Activated B cell treated with CpG ODN at 0.5 μM for 24 hours (primary cell): ENCODE measurements at regions of chr20 and their contacts with region 1.

Region 1: DNA sequence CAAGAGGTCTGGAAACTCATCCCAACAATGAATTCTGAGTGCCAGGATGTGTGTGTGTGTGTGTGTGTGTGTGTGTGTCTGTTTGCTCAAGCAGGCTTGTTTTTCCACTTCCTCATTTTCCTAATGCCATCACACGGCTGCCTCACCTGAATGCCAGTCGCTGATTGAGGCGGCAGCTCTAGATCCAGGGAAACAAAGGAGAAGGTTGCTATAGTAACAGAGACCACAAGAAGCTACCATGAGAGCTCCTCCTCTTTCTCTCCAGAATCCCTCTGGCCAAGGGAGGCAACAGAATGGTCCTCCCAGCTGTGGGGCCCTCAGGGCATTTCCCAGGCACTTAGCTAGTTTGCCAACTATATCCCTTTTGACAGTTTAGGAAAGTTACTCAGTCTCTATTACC is 241.1 kb upstream of the TSHZ2 start:
- DNase-seq: no peak
- ATAC-seq: no peak
- H3K4me3 Mint-ChIP-seq: no peak overlapping the region
- H3K27ac Mint-ChIP-seq: no peak overlapping the region
- H3K4me1 Mint-ChIP-seq: no peaks in the 10 kb centered on the region
- H3K27me3 Mint-ChIP-seq: peaks cover 2% of the 10 kb centered on the region
- CTCF ChIP-seq: no peak

Region 2: GRCh38 chr20:52291109-52291508 is 440.0 kb before region 1 on chr20:
- CTCF ChIA-PET with region 1: no interaction called
- POLR2A ChIA-PET with region 1: interaction called, 10 read pairs
- intact Hi-C with region 1: no loop called
- DNase-seq: no peak
- ATAC-seq: no peak
- H3K4me3 Mint-ChIP-seq: no peak overlapping the region
- H3K27ac Mint-ChIP-seq: no peak overlapping the region
- H3K4me1 Mint-ChIP-seq: no peaks in the 10 kb centered on the region
- H3K27me3 Mint-ChIP-seq: peaks cover 2% of the 10 kb centered on the region
- CTCF ChIP-seq: no peak